MCF 10A (cell line): ENCODE measurements at regions of chr1 and their contacts with region 1.

Region 1: DNA sequence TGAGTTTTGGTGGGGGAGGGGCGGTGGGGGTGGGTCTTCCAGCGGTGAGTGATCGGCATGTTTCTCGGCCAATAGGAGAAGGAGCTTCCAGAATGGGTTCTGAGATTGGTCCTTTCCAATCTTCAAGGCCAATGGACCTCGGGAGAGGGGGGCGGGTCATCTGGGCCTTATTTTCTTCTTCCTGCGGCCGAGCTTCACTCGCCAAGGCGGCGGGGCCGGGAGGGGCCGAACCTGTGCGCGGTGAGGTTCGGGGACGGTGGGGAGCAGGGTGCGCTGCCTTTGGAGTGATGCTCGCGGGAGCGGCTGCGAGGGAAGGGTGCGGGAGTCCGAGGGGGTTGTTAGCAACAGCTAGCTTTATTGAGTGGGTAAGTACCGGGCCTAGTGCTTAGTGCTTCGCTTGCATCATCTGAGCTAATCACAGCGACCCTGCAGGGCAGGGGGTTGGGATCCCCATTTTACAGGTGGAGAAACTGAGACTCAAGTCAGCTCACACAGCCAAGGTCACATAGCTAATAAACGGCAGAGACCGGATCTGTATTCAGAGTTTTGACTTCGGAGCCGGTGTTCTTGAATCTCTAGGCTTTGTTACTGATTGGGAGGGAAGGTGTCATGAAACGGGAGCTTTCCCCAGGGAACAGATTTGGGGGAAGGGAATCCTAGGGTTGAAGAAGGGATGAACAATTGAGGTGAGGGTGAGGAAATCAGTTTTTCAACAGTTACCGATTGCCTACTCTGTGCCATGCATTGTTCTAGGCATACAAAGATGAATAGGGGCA is 549 bp downstream of the KDM4A start:
- DNase-seq: peak; percentile 98
- H3K4me3 Mint-ChIP-seq: peak overlapping the region; percentile 97
- H3K27ac Mint-ChIP-seq: peak overlapping the region; percentile 85
- H3K4me1 Mint-ChIP-seq: peaks cover 18% of the 10 kb centered on the region
- H3K27me3 Mint-ChIP-seq: no peaks in the 10 kb centered on the region
- CTCF ChIP-seq: no peak

Region 2: DNA sequence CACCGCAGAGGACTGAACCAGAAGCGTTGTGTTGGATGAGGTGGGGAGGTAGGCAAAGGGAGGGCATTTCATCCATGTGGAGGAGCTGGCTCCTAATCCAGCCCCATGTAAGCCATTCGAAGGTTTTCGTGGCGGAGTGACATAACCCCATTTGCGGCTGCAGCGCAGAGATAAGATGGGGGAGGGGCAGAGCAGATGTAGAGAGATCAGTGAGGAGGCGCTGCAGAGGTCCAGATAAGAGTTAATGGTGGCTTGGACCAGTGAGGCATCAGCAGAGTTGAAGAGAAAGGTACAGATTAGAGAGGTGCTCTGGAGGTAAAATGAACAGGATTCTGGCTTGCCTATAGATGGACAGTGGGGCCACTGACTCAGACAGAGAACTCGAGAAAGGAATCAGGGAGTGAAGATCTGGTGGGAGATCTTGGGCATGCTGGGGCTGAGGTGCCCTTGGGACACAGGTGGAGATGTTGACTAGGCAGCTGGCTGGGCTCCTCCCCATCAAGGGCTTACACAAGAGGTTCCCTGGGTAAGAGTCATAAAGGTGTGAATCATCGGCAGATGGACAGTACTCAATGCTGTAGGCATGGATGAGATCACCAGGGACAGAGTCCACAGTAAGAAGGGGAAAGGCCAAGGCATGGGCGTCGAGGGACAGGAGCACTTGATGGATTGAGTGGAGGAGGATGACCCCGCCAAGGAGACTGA is 127.6 kb before region 1 on chr1:
- CTCF ChIA-PET with region 1: interaction called, 7 read pairs
- POLR2A ChIA-PET with region 1: interaction called, 14 read pairs
- intact Hi-C with region 1: no loop called
- DNase-seq: peak; percentile 94
- H3K4me3 Mint-ChIP-seq: no peak overlapping the region
- H3K27ac Mint-ChIP-seq: peak overlapping the region; percentile 24
- H3K4me1 Mint-ChIP-seq: peaks cover 29% of the 10 kb centered on the region
- H3K27me3 Mint-ChIP-seq: no peaks in the 10 kb centered on the region
- CTCF ChIP-seq: no peak

Region 3: DNA sequence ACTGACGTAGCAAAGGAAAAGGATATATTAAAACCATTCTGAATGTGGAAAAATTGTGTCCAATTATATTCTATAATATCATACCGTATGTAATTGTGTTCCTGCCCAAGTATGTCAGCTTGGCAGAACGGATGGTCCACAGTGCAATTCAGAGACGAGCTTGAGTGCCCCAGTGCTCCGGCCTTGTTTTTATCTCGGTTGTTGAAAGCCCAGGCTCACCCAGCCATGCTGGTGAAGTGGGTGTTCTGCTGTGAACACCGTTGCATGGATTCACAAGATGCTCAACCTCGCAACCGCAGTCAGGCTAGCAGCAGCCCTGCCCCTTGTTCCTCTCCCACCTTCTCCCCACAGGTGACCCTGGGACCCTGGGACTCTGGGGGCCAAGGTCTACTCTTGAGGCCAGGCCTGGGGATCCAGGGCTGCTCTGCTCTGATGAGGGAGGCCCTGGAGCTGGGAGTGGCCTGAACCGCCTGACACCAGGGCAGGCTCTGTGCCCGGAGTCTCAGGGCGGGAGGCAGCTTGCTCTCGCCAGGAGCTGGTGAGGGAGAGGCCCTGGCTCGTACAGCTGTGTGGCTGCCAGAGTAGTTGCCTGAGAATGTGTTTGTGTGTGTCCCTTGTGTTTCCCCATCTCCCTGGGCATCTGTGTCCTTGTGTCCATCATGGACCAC is 108.6 kb before region 1 on chr1:
- CTCF ChIA-PET with region 1: no interaction called
- POLR2A ChIA-PET with region 1: interaction called, 15 read pairs
- intact Hi-C with region 1: no loop called
- DNase-seq: peak; percentile 18
- H3K4me3 Mint-ChIP-seq: no peak overlapping the region
- H3K27ac Mint-ChIP-seq: peak overlapping the region; percentile 37
- H3K4me1 Mint-ChIP-seq: peaks cover 19% of the 10 kb centered on the region
- H3K27me3 Mint-ChIP-seq: no peaks in the 10 kb centered on the region
- CTCF ChIP-seq: no peak

Region 4: GRCh38 chr1:43582162-43582589 is 68.3 kb before region 1 on chr1:
- CTCF ChIA-PET with region 1: interaction called, 4 read pairs
- POLR2A ChIA-PET with region 1: interaction called, 27 read pairs
- intact Hi-C with region 1: loop called (anchors 5 kb)
- DNase-seq: peak; percentile 98
- H3K4me3 Mint-ChIP-seq: peak overlapping the region; percentile 24
- H3K27ac Mint-ChIP-seq: peak overlapping the region; percentile 80
- H3K4me1 Mint-ChIP-seq: peaks cover 33% of the 10 kb centered on the region
- H3K27me3 Mint-ChIP-seq: no peaks in the 10 kb centered on the region
- CTCF ChIP-seq: no peak

Region 5: DNA sequence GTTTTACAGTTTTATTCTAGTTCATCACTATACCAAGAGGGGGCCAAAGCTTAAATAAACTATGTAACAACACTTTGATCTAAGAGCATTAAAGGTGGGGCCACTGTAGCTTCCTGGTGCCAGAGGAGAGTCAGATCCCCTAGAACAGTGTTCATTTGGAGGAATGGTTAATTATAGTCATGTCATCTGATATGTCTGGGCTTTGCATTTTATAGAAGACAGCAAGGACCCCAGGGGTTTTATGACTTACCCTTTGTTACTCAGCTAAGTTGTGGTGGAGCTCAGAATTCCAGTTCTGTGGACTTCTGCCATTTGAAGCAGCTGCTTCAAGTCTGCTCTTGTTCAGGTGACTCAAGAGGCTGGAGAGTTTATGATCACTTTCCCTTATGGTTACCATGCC is 16.1 kb after region 1 on chr1:
- CTCF ChIA-PET with region 1: interaction called, 8 read pairs
- POLR2A ChIA-PET with region 1: interaction called, 41 read pairs
- intact Hi-C with region 1: no loop called
- DNase-seq: peak; percentile 67
- H3K4me3 Mint-ChIP-seq: no peak overlapping the region
- H3K27ac Mint-ChIP-seq: peak overlapping the region; percentile 9
- H3K4me1 Mint-ChIP-seq: peaks cover 17% of the 10 kb centered on the region
- H3K27me3 Mint-ChIP-seq: no peaks in the 10 kb centered on the region
- CTCF ChIP-seq: no peak

Region 6: DNA sequence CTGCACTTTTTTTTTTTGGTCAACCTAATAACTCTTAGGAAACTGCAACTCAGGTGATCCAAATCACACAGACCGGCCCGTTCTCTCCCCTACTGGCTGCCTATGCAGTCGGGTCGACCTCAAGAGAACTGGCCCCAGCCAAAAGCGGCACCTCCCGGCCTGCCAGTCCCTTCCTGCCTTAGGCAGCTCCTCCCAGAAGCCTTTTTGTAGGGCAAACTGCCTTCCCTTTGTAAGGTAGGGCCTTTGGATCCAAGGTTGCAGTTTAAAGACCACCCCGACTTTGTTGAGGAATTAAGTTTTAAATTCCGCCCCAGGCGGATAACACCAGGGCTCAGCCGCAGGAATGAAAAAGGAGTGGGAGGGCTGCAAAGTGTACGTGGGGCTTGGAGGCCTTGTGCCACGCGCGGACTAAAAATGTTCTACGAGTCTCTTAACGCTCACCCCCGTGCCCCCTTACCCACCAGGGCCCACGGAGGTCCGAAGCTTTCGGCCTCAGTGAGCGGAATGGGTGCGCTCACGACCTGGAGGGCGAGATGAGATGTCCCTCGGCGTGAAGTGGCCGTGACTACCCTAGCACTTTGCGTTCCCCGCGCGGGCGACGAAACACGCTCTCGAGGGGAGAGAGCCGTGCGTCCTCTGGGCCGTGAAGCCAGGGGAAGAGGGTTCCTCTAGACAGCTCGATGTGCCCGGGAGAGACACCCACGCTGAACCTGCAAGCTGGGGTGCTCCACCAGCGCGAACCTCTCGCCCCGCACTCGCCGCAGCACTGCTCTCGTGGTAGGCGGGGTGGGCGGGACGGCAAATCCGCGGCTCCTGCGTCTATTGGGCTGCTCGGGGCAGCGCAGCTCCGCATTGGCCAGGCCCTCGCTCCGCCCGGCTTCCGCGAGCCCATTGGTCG is 56.3 kb after region 1 on chr1:
- CTCF ChIA-PET with region 1: no interaction called
- POLR2A ChIA-PET with region 1: interaction called, 37 read pairs
- intact Hi-C with region 1: loop called (anchors 2 kb)
- DNase-seq: peak; percentile 87
- H3K4me3 Mint-ChIP-seq: peak overlapping the region; percentile 82
- H3K27ac Mint-ChIP-seq: peak overlapping the region; percentile 54
- H3K4me1 Mint-ChIP-seq: peaks cover 26% of the 10 kb centered on the region
- H3K27me3 Mint-ChIP-seq: no peaks in the 10 kb centered on the region
- CTCF ChIP-seq: no peak

Region 7: GRCh38 chr1:44249543-44249942 is 599.0 kb after region 1 on chr1:
- CTCF ChIA-PET with region 1: no interaction called
- POLR2A ChIA-PET with region 1: no interaction called
- intact Hi-C with region 1: no loop called
- DNase-seq: no peak
- H3K4me3 Mint-ChIP-seq: no peak overlapping the region
- H3K27ac Mint-ChIP-seq: no peak overlapping the region
- H3K4me1 Mint-ChIP-seq: no peaks in the 10 kb centered on the region
- H3K27me3 Mint-ChIP-seq: no peaks in the 10 kb centered on the region
- CTCF ChIP-seq: no peak